Activated naive CD4-positive, alpha-beta T cell treated with anti-CD3 and anti-CD28 coated beads for 36 hours (primary cell): ENCODE measurements at regions of chr5 and their contacts with region 1.

Region 1: DNA sequence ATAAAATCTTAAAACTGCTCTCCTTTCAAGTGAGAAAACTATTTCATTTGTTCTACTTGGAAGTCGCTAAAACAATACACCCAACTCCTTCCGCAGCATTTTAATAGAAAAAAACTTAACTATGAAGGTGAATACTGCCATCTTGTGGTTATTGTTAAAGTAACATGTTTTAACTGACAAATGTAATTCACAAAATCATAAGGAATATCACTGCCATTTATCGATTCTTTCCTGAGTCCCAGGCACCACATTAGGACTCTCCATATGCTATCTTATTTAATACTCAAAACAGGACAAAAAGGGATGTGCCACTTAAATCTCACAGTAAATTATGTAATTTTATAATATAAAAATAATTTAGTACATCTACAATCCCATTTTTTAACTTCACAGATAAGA is 130.5 kb upstream of the ITGA1 start:
- DNase-seq: no peak
- H3K4me3 Mint-ChIP-seq: no peak overlapping the region
- H3K27ac Mint-ChIP-seq: no peak overlapping the region
- H3K4me1 Mint-ChIP-seq: no peaks in the 10 kb centered on the region
- H3K27me3 Mint-ChIP-seq: peaks cover 6% of the 10 kb centered on the region

Region 2: DNA sequence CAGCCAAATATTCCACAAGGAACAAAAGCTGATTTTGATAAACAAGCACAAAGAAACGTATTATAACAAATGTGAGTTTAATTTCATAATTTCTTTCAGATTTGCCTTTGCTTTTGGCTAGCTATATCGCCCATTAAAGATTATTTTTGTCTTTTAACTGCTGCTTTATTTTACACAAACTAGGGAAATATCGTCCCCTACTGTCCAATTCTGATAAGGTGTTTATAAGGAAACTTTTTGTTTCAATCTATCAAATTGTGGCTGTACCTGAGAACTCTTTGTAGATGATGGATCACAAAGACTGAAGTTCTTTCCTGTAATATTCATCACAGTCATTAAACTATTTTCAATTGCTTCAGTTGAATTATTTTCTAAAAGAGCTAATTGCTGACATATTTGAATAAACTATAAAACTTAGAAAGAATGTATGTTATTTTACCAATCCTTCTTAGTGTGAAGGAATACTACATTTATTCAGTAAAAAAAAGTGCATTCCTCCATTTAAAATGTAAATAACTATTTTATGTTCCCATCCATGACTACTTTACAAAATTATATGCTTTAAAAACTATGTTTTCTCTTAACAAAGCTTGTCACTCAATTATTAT is 300.8 kb before region 1 on chr5:
- CTCF ChIA-PET with region 1: no interaction called
- intact Hi-C with region 1: loop called (anchors 2 kb)
- DNase-seq: no peak
- H3K4me3 Mint-ChIP-seq: no peak overlapping the region
- H3K27ac Mint-ChIP-seq: no peak overlapping the region
- H3K4me1 Mint-ChIP-seq: no peaks in the 10 kb centered on the region
- H3K27me3 Mint-ChIP-seq: no peaks in the 10 kb centered on the region